AG04449 (cell line): ENCODE measurements at regions of chr20 and their contacts with region 1.

Region 1: GRCh38 chr20:6058684-6059295 is 4.9 kb upstream of the LRRN4 start:
- DNase-seq: no peak
- H3K4me3 ChIP-seq: no peak overlapping the region
- CTCF ChIP-seq: no peak

Region 2: DNA sequence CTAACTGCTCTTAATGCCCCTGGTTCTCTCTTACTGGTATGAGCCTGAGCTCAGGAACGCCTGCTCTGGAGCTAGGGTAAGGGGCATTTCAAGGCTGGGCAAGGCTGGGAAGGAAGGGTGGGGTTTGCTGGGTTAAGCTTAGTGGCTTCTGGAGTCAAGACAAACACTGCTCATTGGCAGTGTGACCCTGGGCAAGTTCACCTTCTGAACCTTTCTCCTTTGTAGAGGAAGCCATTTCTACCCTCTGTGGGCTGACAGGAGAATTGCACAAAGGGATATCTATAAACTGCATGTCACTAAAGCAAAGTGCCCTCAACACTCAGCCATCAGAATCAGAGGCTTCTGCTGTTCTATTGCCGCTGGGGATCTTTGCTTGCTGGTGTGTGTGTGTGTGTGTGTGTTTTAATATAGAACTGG is 15.4 kb after region 1 on chr20:
- CTCF ChIA-PET with region 1: interaction called, 39 read pairs
- POLR2A ChIA-PET with region 1: no interaction called
- DNase-seq: no peak
- H3K4me3 ChIP-seq: no peak overlapping the region
- CTCF ChIP-seq: peak; percentile 42

Region 3: GRCh38 chr20:6489361-6490171 is 430.8 kb after region 1 on chr20:
- CTCF ChIA-PET with region 1: no interaction called
- POLR2A ChIA-PET with region 1: no interaction called
- DNase-seq: no peak
- H3K4me3 ChIP-seq: no peak overlapping the region
- CTCF ChIP-seq: no peak